B cell (primary cell): ENCODE measurements at regions of chr1 and their contacts with region 1.

Region 1: DNA sequence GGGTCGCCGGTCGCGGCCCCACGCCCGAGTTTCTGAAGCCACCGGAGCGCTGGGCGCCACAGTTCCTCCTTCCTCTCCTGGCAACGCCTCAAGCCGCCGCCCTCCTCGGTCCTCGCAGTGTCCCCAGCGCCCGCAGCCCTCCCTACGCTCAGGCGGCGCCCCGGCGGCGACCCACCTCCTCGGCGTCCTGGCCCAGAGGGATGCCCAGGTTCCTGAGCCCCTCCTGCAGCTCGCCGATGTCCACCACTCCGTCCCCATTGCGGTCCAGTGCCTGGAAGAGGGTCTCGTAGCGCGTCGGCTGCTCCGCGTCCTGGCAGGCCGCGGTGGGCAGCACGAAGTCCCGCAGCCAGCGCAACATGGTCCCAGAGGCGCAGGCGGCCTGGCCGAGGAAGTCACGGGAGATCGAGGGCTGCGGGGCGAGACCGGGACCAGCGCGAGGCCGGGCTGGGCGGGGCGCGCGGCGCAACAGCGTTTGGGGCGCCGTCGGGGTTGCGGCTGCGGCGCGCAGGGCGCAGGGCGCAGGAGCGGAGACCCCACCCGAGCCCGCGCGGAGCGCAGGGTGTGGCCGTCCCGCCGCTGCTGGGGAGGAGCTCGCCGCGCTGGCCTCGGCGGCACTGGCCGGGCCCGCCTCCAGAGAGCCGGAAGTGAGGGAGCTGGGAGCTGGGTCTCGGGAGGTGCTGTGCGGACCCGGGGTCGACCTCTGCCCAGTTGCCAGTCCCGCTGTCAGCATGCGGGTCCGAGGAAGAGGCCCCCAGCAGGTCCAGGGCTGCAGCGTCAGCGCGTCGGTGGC is at the start of gene SLC25A24:
- DNase-seq: peak; percentile 85
- ATAC-seq: peak; percentile 95
- H3K4me3 ChIP-seq: peak within 1 kb of the TSS; percentile 85 to 96 (median 87)
- H3K4me3 Mint-ChIP-seq: peak within 1 kb of the TSS; percentile 93
- H3K27ac ChIP-seq: peak within 1 kb of the TSS; percentile 80 to 84
- H3K27ac Mint-ChIP-seq: peak within 1 kb of the TSS; percentile 94
- H3K4me1 ChIP-seq: peaks cover 13 to 16% of the 10 kb centered on the region in 2 donors
- H3K4me1 Mint-ChIP-seq: peaks cover 32% of the 10 kb centered on the region
- H3K27me3 ChIP-seq: no peaks in the 10 kb centered on the region
- H3K27me3 Mint-ChIP-seq: no peaks in the 10 kb centered on the region
- CTCF ChIP-seq: no peak
- total RNA-seq, gene SLC25A24: 25.3 and 25.6 TPM in 2 replicates

Region 2: GRCh38 chr1:108661030-108661620 is 461.1 kb after region 1 on chr1 and contains the start of gene HENMT1:
- CTCF ChIA-PET with region 1: no interaction called
- POLR2A ChIA-PET with region 1: interaction called, 6 read pairs
- intact Hi-C with region 1: loop called (anchors 5 kb)
- DNase-seq: peak; percentile 94
- ATAC-seq: peak; percentile 84
- H3K4me3 ChIP-seq: peak within 1 kb of the TSS; percentile 2 to 69 (median 59)
- H3K4me3 Mint-ChIP-seq: peak within 1 kb of the TSS; percentile 88
- H3K27ac ChIP-seq: peak within 1 kb of the TSS; percentile 94 to 95
- H3K27ac Mint-ChIP-seq: peak within 1 kb of the TSS; percentile 96
- H3K4me1 ChIP-seq: peaks cover 8 to 10% of the 10 kb centered on the region in 2 donors
- H3K4me1 Mint-ChIP-seq: peaks cover 12% of the 10 kb centered on the region
- H3K27me3 ChIP-seq: no peaks in the 10 kb centered on the region
- H3K27me3 Mint-ChIP-seq: no peaks in the 10 kb centered on the region
- CTCF ChIP-seq: no peak
- total RNA-seq, gene HENMT1: 6.2 and 6.4 TPM in 2 replicates